HCT116 (cell line): ENCODE measurements at regions of chr16 and their contacts with region 1.

Region 1: GRCh38 chr16:11742539-11743307 is at the start of gene TXNDC11:
- DNase-seq: peak; percentile 94
- ATAC-seq: peak; percentile 91
- H3K4me3 ChIP-seq: peak within 1 kb of the TSS; percentile 82 to 89
- H3K27ac ChIP-seq: peak within 1 kb of the TSS; percentile 89
- H3K4me1 ChIP-seq: peaks cover 18 to 29% of the 10 kb centered on the region in 2 experiments; a peak in 3 of 4 replicates
- H3K27me3 ChIP-seq: no peaks in the 10 kb centered on the region
- CTCF ChIP-seq: no peak
- POLR2A ChIP-seq: peak; percentile 81
- RAD21 ChIP-seq: no peak
- total RNA-seq, gene TXNDC11: 26.8 TPM

Region 2: DNA sequence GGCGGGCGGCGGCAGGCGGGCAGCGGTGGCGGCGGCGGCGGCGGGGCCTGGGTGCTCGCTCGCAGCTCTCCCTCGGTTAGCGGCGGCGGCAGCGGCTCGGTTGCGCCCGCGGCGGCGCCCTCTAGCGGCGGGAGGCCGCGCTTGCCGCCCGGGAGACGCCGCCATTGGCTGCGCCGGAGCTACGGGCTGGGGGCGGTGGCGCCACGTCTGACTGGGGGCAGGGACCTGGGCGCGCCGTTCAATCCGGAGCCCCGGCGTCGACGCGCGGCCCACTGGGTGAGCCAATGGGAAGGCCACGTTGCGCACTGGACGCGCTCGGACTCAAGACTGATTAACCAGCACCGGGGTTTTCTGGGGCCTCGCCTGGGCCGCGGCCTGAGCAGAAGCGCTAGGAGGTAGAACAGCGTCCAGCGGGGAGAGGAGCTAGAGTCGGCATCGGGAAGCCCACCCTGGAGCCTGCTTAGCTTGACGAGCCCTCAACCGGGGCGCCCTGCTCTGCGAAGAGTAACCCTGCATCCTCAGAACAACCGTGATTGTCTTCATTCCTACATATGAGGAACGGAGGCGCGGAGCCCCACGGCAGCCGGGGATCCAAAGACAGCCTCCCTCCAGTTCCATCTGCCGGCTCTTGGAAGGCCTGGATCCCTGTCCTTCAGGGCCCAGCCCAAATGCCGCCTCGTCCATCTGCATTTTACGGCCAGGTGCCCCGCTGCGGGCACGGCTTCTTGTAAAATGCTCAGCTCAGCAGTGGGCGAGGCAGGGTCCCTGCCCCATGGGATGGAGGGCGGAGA is 54.6 kb after region 1 on chr16 and contains the start of gene ZC3H7A:
- CTCF ChIA-PET with region 1: no interaction called
- POLR2A ChIA-PET with region 1: interaction called, 10 read pairs
- RAD21 ChIA-PET with region 1: no interaction called
- intact Hi-C with region 1: no loop called
- DNase-seq: peak; percentile 91
- ATAC-seq: peak; percentile 99
- H3K4me3 ChIP-seq: peak within 1 kb of the TSS; percentile 94 to 97
- H3K27ac ChIP-seq: peak within 1 kb of the TSS; percentile 91
- H3K4me1 ChIP-seq: peaks cover 7 to 26% of the 10 kb centered on the region in 2 experiments; a peak in 3 of 4 replicates
- H3K27me3 ChIP-seq: no peaks in the 10 kb centered on the region
- CTCF ChIP-seq: peak in 2 of 3 experiments; percentile 35 to 51; a peak in 4 of 6 replicates
- POLR2A ChIP-seq: peak; percentile 84
- RAD21 ChIP-seq: no peak
- total RNA-seq, gene ZC3H7A: 33.4 TPM